HEK293 (cell line): ENCODE measurements at regions of chr4 and their contacts with region 1.

Region 1: DNA sequence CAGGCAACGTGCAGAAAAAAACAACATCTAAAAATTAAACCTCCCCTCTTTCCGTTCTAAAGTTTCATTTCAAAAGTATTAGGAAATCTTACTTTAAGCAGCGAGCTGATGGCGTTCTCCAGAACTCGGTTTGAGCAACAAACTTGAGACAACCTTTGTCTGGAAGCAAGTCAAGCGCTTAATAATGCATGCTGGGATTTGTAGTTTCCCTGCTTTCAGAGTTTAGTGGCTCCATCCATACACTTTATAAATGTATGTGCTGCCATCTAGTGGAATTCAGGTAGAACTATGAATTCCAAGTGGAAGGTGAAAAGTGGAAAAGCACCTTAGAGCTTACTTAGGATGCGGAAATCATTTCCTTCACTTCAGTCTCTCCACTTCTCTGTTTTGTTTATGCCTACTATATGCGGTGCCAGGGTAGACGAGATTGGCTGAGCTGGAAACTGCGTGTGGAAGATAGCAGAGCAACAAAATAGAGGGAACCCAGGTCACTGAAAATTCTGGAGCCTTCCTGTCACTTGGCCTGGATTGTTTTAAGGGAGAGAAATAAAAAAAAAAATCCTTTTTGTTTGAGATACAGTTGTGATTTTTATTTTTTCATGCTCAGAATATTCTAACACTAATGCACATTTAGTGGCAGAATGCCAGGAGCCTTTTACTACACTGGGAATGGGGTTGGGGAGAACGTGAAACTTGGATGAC is at the start of gene BDH2:
- H3K4me3 ChIP-seq: peak within 1 kb of the TSS; percentile 35
- H3K27ac ChIP-seq: no peak within 1 kb of the TSS
- H3K4me1 ChIP-seq: no peaks in the 10 kb centered on the region
- CTCF ChIP-seq: peak; percentile 53; the same call in 1 of the 2 replicates

Region 2: DNA sequence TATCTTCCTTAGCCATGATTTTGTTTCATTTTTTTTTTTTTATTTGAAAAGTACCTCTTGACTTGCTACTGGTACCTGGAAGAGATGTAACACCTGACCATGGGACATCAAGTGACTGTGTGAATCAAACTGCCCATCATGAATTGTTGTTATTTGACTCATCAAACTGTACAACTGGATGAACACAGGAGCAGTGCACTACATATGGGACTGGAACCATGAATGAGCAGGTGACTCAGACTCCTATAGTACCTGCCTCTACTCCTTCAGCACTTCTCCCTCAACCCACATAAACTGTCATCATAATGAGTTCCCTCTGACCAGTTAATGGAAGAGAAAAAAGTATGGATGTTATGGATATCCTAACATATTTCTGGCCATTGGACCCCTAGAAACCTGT is 256.6 kb before region 1 on chr4:
- CTCF ChIA-PET with region 1: no interaction called
- POLR2A ChIA-PET with region 1: no interaction called
- H3K4me3 ChIP-seq: no peak overlapping the region
- H3K27ac ChIP-seq: no peak overlapping the region
- H3K4me1 ChIP-seq: no peaks in the 10 kb centered on the region
- CTCF ChIP-seq: no peak

Region 3: DNA sequence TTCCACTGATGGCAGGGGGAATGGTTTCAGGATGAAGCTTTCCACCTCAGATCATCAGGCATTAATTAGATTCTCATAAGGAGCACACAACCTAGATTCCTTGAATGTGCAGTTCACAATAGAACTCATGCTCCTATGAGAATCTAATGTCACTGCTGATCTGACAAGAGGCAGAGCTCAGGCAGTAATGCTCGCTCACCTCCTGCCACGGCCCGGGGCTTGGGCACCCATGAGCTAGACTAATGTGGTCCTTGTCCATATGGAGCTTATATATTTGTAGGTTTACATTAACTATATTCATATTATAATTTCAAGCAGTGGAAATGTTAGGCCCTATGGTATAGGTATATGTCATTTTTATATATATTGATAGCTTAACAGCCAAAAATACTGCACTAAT is 47.7 kb before region 1 on chr4:
- CTCF ChIA-PET with region 1: interaction called, 10 read pairs
- POLR2A ChIA-PET with region 1: no interaction called
- H3K4me3 ChIP-seq: no peak overlapping the region
- H3K27ac ChIP-seq: no peak overlapping the region
- H3K4me1 ChIP-seq: no peaks in the 10 kb centered on the region
- CTCF ChIP-seq: no peak